CD8-positive, alpha-beta T cell (primary cell): ENCODE measurements at regions of chr6 and their contacts with region 1.

Region 1: DNA sequence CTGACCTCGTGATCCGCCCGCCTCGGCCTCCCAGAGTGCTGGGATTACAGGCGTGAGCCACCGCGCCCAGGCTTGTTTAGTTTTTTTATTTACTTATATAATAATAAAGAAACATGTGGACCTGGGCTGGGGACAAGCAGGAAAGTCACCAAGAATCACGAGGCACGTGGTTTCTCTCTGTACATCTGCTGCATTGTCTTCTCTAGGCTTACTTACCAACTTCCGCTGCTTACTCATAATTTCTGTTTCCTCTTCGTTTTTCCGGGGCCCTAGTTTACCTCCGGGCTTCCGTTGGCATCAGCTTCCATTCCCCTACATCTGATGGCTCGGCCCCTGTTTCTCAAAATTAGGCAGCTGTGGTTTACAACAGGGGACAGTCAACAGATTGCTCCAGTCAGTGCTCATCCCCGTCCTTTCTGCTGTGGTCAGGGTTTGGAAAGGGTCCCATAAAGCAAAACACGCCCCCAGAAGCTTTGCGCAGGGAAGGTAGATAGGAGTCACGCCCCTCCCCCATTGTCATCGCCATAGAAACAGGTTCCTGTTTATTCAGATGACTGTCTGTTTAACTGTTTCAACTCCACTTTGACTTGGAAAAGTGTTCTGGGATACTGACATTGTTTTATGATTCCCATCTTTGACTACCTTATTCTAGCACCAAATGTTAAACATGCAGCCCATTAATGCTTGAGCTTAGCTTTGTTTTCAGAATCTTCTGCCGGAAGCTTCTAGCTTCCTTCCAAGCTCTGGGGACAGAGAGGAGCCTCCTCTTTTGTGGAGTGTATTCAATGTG is 31.9 kb upstream of the TXLNB start:
- DNase-seq: peak; percentile 56 to 91 (median 84)
- ATAC-seq: peak; percentile 87
- H3K4me3 ChIP-seq: peak overlapping the region; percentile 54 to 59
- H3K4me3 Mint-ChIP-seq: peak overlapping the region; percentile 89
- H3K27ac ChIP-seq: peak overlapping the region; percentile 82 to 97
- H3K27ac Mint-ChIP-seq: peak overlapping the region; percentile 97
- H3K4me1 ChIP-seq: peaks cover 18% of the 10 kb centered on the region
- H3K4me1 Mint-ChIP-seq: peaks cover 35% of the 10 kb centered on the region
- H3K27me3 ChIP-seq: no peaks in the 10 kb centered on the region
- H3K27me3 Mint-ChIP-seq: no peaks in the 10 kb centered on the region
- CTCF ChIP-seq: no peak

Region 2: DNA sequence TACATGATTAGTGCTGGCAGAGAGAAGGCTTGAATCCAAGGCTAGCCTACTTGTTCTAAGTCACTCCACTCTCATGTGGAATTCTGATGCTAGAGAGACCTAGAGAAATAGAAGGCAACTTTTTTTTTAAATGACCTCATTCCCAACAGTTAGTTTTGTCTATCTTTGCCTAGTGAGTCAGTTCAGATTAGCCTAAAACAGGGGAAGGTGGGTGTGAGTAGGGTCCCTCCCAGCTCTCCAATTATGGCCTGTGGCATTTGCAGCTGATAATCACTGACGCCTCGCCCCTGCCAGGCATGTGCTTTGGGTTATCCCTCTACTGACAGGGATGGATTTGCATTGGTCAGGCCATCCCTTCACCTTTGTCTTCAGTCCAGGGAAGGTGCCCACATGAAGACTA is 45.5 kb before region 1 on chr6:
- CTCF ChIA-PET with region 1: no interaction called
- POLR2A ChIA-PET with region 1: interaction called, 4 read pairs
- intact Hi-C with region 1: loop called in 1 of 2 experiments (anchors 5 kb)
- DNase-seq: no peak
- ATAC-seq: no peak
- H3K4me3 ChIP-seq: no peak overlapping the region
- H3K4me3 Mint-ChIP-seq: no peak overlapping the region
- H3K27ac ChIP-seq: no peak overlapping the region
- H3K27ac Mint-ChIP-seq: peak overlapping the region; percentile 80
- H3K4me1 ChIP-seq: peaks cover 16% of the 10 kb centered on the region
- H3K4me1 Mint-ChIP-seq: peaks cover 39% of the 10 kb centered on the region
- H3K27me3 ChIP-seq: no peaks in the 10 kb centered on the region
- H3K27me3 Mint-ChIP-seq: no peaks in the 10 kb centered on the region
- CTCF ChIP-seq: no peak

Region 3: DNA sequence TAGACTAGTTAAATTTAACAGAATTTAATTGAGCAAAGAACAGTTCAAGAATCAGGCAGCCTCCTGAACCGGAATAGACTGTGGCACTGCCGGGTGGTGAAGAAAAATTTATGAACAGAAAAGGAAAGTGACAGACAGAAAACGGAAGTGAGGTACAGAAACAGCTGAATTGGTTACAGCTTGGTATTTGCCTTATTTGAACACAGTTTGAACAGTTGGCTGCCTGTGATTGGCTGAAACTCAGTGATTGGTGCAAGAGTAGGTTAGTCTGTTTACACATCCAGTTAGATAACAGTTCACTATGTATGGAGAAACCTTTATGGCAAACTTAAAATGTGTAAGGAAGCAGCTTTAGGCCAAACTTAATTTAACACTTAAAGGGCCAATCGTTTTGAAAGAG is 166.8 kb after region 1 on chr6:
- CTCF ChIA-PET with region 1: no interaction called
- POLR2A ChIA-PET with region 1: no interaction called
- intact Hi-C with region 1: no loop called
- DNase-seq: peak in 4 of 9 experiments; percentile 11 to 76 (median 44)
- ATAC-seq: peak; percentile 58
- H3K4me3 ChIP-seq: no peak overlapping the region
- H3K4me3 Mint-ChIP-seq: peak overlapping the region; percentile 3
- H3K27ac ChIP-seq: peak overlapping the region in 1 of 2 experiments; percentile 6
- H3K27ac Mint-ChIP-seq: peak overlapping the region; percentile 5
- H3K4me1 ChIP-seq: peaks cover 4% of the 10 kb centered on the region
- H3K4me1 Mint-ChIP-seq: peaks cover 13% of the 10 kb centered on the region
- H3K27me3 ChIP-seq: no peaks in the 10 kb centered on the region
- H3K27me3 Mint-ChIP-seq: no peaks in the 10 kb centered on the region
- CTCF ChIP-seq: no peak